Endothelial cell of umbilical vein (primary cell): ENCODE measurements at regions of chr1 and their contacts with region 1.

Region 1: GRCh38 chr1:167270349-167271092 is 49.8 kb downstream of the POU2F1 start:
- DNase-seq: peak; percentile 47
- H3K4me3 ChIP-seq: no peak overlapping the region
- H3K27ac ChIP-seq: no peak overlapping the region
- H3K4me1 ChIP-seq: peaks cover 3% of the 10 kb centered on the region
- H3K27me3 ChIP-seq: no peaks in the 10 kb centered on the region
- CTCF ChIP-seq: no peak
- POLR2A ChIP-seq: no peak

Region 2: GRCh38 chr1:167258858-167259257 is 11.7 kb before region 1 on chr1:
- CTCF ChIA-PET with region 1: interaction called, 22 read pairs
- POLR2A ChIA-PET with region 1: no interaction called
- dilution Hi-C with region 1: no loop called
- intact Hi-C with region 1: no loop called
- DNase-seq: no peak
- H3K4me3 ChIP-seq: no peak overlapping the region
- H3K27ac ChIP-seq: no peak overlapping the region
- H3K4me1 ChIP-seq: no peaks in the 10 kb centered on the region
- H3K27me3 ChIP-seq: no peaks in the 10 kb centered on the region
- CTCF ChIP-seq: no peak
- POLR2A ChIP-seq: no peak

Region 3: DNA sequence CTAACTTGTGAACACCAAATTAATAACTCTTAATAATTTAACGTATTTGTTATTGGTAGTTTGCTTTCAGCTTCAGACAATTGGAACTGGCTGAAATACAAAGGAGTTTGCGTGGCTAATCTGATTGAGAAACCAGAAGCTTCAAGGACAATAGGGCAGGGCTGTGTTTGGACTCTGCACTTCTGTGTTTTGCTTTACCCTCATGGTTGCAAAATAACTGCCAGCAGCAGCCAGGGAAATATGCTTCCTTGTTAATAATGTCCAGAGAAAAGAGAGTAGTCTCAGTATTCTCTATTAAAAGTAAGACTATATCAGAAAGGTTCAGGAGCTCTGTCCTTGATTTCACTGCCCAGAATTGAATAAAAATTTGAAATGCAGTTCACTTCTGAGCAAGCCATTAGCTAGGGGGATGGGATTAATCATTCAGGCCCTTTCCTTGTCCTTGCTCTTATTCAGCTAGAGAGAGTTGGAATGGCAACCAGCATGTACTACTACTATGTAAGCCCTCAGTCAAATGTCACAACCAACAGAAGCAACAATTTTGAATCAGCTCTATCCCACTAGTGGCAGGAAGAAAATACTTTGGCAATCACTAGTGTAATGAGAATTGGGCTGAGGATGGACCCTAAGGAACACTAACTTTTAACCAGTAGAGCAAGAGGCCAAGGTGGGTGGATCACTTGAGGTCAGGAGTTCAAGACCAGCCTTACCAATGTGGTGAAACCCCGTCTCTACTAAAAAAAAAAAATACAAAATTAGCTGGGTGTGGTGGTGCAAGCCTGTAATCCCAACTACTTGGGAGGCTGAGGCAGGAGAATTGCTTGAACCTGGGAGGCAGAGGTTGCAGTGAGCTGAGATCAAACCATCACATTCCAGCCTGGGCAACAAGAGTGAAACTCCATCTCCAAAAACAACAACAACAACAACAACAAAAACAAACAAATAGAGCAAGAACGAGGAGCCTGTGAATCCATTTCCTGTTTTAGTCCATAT is 27.0 kb after region 1 on chr1:
- CTCF ChIA-PET with region 1: interaction called, 15 read pairs
- POLR2A ChIA-PET with region 1: interaction called, 3 read pairs
- dilution Hi-C with region 1: no loop called
- intact Hi-C with region 1: no loop called
- DNase-seq: peak; percentile 52
- H3K4me3 ChIP-seq: no peak overlapping the region
- H3K27ac ChIP-seq: no peak overlapping the region
- H3K4me1 ChIP-seq: peaks cover 18% of the 10 kb centered on the region
- H3K27me3 ChIP-seq: no peaks in the 10 kb centered on the region
- CTCF ChIP-seq: no peak
- POLR2A ChIP-seq: no peak

Region 4: GRCh38 chr1:167401260-167401873 is 130.8 kb after region 1 on chr1:
- CTCF ChIA-PET with region 1: interaction called, 27 read pairs
- POLR2A ChIA-PET with region 1: no interaction called
- dilution Hi-C with region 1: no loop called
- intact Hi-C with region 1: loop called (anchors 2 kb)
- DNase-seq: peak; percentile 61
- H3K4me3 ChIP-seq: no peak overlapping the region
- H3K27ac ChIP-seq: no peak overlapping the region
- H3K4me1 ChIP-seq: peaks cover 15% of the 10 kb centered on the region
- H3K27me3 ChIP-seq: no peaks in the 10 kb centered on the region
- CTCF ChIP-seq: peak; percentile 42 to 64
- POLR2A ChIP-seq: no peak

Region 5: DNA sequence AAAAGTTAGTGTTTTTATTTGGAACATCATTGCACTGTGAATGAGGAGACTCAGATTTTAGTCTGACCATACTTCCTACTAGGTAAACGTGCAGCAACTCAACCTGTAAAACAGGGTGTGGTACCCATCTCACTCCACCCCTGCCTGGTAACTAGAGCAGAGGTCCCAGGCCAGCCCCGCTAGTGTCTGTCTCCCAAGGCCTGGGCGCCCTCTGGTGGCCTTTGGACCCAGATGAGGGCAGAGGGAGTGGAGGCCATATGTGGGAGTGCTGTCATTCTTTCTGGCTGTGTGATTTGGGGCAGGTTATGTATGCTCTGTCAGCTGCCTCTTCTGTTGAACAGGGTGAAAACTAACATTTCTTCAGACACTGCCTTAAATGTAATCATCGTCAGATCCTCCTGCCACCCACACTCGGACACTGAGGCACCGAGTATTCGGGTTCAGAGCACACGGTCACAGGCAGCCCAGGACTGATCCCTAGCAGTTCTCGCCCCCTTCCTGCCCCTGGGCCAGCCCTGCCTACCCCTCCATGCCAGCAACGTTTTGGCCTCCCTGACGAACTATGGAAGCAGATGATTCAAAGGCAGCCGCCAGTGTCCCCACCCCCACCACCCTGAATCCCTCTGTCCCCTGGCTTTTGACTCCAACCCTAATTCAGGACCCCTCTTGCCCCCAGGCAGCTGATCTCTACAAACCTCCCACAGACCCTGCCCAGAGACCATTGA is 171.8 kb after region 1 on chr1:
- CTCF ChIA-PET with region 1: interaction called, 162 read pairs
- POLR2A ChIA-PET with region 1: no interaction called
- dilution Hi-C with region 1: no loop called
- intact Hi-C with region 1: loop called (anchors 1 kb)
- DNase-seq: peak; percentile 49
- H3K4me3 ChIP-seq: no peak overlapping the region
- H3K27ac ChIP-seq: no peak overlapping the region
- H3K4me1 ChIP-seq: no peaks in the 10 kb centered on the region
- H3K27me3 ChIP-seq: peaks cover 0 to 4% of the 10 kb centered on the region in 2 experiments
- CTCF ChIP-seq: peak; percentile 81 to 88
- POLR2A ChIP-seq: no peak

Region 6: DNA sequence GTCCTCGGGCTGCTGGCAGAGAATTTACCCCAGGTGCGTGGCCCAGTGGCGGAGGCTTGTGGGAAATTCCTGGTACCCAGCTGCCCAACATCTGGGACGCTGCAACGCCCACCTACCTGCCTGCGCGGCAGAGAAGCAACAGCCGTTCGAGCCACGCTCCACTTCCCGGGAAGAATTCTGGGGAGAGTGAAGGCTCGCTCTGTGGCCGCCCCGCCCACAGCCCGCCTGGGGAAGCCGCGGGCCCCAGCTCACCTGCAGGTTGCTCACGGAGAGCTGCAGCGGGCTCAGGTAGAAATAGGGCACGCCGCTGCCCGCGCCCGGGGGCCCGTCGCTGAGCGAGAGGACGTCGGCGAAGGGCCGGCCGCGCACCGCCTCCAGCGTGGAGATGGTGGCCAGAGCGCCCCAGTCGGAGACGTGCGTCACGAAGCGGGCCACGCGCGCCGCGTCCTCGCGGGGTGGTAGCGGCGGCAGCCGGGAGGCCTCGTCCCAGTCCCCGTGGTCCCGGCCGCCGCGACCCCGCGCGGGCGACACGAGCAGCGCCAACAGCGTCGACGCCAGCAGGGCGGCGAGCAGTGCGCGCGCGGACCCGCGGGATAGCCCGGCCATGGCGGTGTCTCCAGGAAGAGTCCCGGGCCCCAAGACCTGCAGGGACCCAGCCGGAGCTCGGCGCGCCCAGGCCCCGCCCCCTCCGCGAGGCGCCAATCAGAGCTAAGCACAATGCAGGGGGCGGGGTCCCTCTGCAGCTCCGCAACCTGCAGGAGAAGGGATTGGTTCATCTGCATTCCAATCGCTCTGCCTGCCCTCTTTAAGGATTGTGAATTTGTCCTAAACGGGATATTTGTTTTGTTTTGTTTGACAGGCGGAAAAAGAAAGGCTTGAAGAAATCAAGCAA is 282.9 kb after region 1 on chr1 and contains the start of gene CREG1:
- CTCF ChIA-PET with region 1: interaction called, 8 read pairs
- POLR2A ChIA-PET with region 1: no interaction called
- dilution Hi-C with region 1: no loop called
- intact Hi-C with region 1: loop called (anchors 5 kb)
- DNase-seq: peak; percentile 91
- H3K4me3 ChIP-seq: peak within 1 kb of the TSS; percentile 42 to 60 (median 49)
- H3K27ac ChIP-seq: no peak within 1 kb of the TSS
- H3K4me1 ChIP-seq: peaks cover 5% of the 10 kb centered on the region
- H3K27me3 ChIP-seq: peaks cover 0 to 2% of the 10 kb centered on the region in 2 experiments
- CTCF ChIP-seq: no peak
- POLR2A ChIP-seq: peak; percentile 49
- total RNA-seq, gene CREG1: 12.1 and 15.8 TPM in 2 replicates